ENCODE measurements at regions of chr10 and their contacts with region 1.

Region 1: DNA sequence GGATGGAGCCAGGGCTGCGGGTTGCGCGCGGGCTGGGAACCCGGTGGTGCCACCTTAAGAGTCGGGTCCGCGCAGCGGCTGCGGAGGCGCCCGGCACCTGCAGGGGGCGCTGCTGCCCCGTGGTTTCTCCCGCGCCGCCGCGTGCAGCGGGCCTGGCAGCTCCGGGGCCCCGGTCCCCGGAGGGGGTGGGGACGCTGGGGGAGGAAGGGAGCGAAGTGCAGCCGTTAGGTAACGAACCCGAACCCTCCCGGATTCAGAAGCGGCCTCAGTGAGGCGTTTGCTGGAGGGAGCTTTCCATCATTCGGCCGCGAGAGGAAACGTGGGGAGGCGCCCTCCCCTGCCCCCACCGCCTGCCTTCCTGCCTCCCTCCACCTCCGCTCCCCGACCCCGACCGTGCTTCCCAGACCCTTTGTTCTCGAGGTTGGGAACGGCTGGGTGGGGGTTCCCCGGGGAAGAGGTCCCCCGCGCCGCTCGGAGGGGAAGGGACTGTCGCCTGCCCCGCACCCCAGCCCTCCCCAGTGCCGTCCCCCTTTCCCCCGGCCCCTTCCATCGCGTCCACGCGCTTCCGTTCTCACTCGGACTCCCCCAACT is 29.6 kb downstream of the SKIDA1 start:
- DNase-seq: peak; percentile 77 to 94 (median 85)
- ATAC-seq: peak; percentile 85
- H3K4me3 ChIP-seq: peak overlapping the region; percentile 73 to 79
- H3K4me3 Mint-ChIP-seq: peak overlapping the region; percentile 81
- H3K27ac ChIP-seq: no peak overlapping the region
- H3K27ac Mint-ChIP-seq: no peak overlapping the region
- H3K4me1 ChIP-seq: peaks cover 35% of the 10 kb centered on the region
- H3K4me1 Mint-ChIP-seq: peaks cover 19% of the 10 kb centered on the region
- H3K27me3 ChIP-seq: peaks cover 53 to 58% of the 10 kb centered on the region in 2 experiments
- H3K27me3 Mint-ChIP-seq: peaks cover 60% of the 10 kb centered on the region
- CTCF ChIP-seq: peak; percentile 98

Region 2: GRCh38 chr10:21432271-21432670 is 63.6 kb before region 1 on chr10:
- CTCF ChIA-PET with region 1: no interaction called
- POLR2A ChIA-PET with region 1: no interaction called
- intact Hi-C with region 1: no loop called
- DNase-seq: no peak
- ATAC-seq: no peak
- H3K4me3 ChIP-seq: no peak overlapping the region
- H3K4me3 Mint-ChIP-seq: no peak overlapping the region
- H3K27ac ChIP-seq: no peak overlapping the region
- H3K27ac Mint-ChIP-seq: no peak overlapping the region
- H3K4me1 ChIP-seq: no peaks in the 10 kb centered on the region
- H3K4me1 Mint-ChIP-seq: no peaks in the 10 kb centered on the region
- H3K27me3 ChIP-seq: no peaks in the 10 kb centered on the region
- H3K27me3 Mint-ChIP-seq: peaks cover 7% of the 10 kb centered on the region
- CTCF ChIP-seq: no peak

Region 3: DNA sequence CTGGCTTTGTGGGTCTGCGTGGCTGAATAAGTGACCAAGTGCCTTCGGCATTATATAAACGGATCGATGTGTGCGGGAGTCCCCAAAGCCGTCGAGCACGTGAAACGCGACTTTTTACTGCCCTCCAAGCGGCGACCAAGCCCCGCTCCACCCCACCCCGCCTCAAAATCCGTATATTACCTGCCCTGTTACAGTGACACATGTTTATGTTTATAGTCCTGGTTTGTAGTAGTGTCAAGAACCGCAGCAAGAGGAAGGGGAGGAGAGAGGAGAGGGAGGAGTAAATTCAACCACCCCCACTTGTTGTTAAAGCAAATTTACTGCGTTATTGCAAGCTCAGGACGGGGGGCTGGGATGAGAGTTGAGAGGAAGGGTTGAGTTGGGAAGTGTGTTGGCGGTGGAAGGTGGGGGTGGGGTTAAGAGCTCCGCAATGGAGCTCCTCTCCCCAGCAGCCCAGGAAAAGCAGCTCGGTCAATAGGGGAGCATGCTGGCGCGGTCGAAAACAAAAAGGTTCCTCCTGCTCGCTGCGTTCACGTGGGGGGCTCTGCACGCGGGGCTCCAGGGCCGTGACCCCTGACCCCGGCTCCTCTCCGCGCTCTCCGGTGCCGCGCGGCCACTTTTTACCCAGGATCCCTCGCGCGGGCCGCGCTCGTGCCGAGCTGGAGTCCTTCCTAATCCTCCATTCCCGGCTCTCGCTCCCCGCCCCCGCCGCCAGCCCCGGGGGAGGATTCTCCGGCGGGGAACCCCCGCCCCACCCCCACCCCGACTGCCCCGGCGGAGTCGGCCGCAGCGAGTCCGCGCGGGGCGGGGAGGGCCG is 29.7 kb after region 1 on chr10 and contains the start of gene SKIDA1:
- CTCF ChIA-PET with region 1: interaction called, 11 read pairs
- POLR2A ChIA-PET with region 1: interaction called, 12 read pairs
- intact Hi-C with region 1: loop called in 1 of 2 experiments (anchors 2 kb)
- DNase-seq: peak; percentile 13 to 77 (median 53)
- ATAC-seq: peak; percentile 73
- H3K4me3 ChIP-seq: peak within 1 kb of the TSS; percentile 70 to 75
- H3K4me3 Mint-ChIP-seq: peak within 1 kb of the TSS; percentile 87
- H3K27ac ChIP-seq: peak within 1 kb of the TSS; percentile 31 to 70
- H3K27ac Mint-ChIP-seq: peak within 1 kb of the TSS; percentile 92
- H3K4me1 ChIP-seq: peaks cover 15% of the 10 kb centered on the region
- H3K4me1 Mint-ChIP-seq: peaks cover 25% of the 10 kb centered on the region
- H3K27me3 ChIP-seq: peaks cover 17 to 28% of the 10 kb centered on the region in 2 experiments
- H3K27me3 Mint-ChIP-seq: peaks cover 39% of the 10 kb centered on the region
- CTCF ChIP-seq: no peak
- total RNA-seq, gene SKIDA1: not detected

Region 4: GRCh38 chr10:21556527-21556926 is 60.7 kb after region 1 on chr10:
- CTCF ChIA-PET with region 1: no interaction called
- POLR2A ChIA-PET with region 1: no interaction called
- intact Hi-C with region 1: no loop called
- DNase-seq: no peak
- ATAC-seq: no peak
- H3K4me3 ChIP-seq: no peak overlapping the region
- H3K4me3 Mint-ChIP-seq: no peak overlapping the region
- H3K27ac ChIP-seq: no peak overlapping the region
- H3K27ac Mint-ChIP-seq: no peak overlapping the region
- H3K4me1 ChIP-seq: no peaks in the 10 kb centered on the region
- H3K4me1 Mint-ChIP-seq: peaks cover 39% of the 10 kb centered on the region
- H3K27me3 ChIP-seq: no peaks in the 10 kb centered on the region
- H3K27me3 Mint-ChIP-seq: no peaks in the 10 kb centered on the region
- CTCF ChIP-seq: no peak

Region 5: DNA sequence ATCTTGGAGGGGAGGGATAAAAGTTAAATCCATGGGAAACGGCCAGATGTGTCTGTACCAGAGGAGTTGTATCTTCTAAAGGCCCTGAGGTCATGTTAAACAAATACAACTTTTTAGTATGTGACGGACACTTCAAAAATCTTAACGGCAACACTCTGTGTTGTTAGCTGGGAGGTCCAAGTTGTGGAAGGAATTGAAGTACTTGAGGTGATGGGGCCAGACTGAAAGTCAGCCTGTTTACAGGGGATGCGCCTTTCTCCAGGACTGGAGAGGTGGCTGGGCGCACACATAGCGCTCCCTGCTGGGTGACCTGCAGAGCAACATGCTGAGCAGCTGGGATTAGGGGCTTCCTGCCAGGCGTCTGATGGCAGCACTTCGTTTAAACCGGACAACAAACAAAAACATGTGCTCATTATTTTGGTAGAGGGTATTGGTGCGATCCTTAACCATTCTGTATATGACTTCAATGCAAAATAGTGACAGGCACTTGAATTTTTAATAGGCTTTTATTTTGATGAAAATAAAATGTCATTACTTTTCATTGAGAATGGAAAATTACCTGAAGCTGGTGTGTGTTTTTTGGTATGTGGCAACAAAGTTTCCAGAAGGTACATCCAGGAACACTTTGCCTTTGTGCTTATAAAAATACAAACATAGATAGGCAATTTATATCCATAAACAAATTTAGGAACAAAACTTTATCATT is 236.4 kb after region 1 on chr10:
- CTCF ChIA-PET with region 1: interaction called, 25 read pairs
- POLR2A ChIA-PET with region 1: no interaction called
- intact Hi-C with region 1: loop called (anchors 1 kb)
- DNase-seq: peak in 8 of 9 experiments; percentile 22 to 63 (median 46)
- ATAC-seq: peak; percentile 85
- H3K4me3 ChIP-seq: no peak overlapping the region
- H3K4me3 Mint-ChIP-seq: no peak overlapping the region
- H3K27ac ChIP-seq: no peak overlapping the region
- H3K27ac Mint-ChIP-seq: no peak overlapping the region
- H3K4me1 ChIP-seq: peaks cover 9% of the 10 kb centered on the region
- H3K4me1 Mint-ChIP-seq: peaks cover 27% of the 10 kb centered on the region
- H3K27me3 ChIP-seq: no peaks in the 10 kb centered on the region
- H3K27me3 Mint-ChIP-seq: no peaks in the 10 kb centered on the region
- CTCF ChIP-seq: peak; percentile 56

Region 6: DNA sequence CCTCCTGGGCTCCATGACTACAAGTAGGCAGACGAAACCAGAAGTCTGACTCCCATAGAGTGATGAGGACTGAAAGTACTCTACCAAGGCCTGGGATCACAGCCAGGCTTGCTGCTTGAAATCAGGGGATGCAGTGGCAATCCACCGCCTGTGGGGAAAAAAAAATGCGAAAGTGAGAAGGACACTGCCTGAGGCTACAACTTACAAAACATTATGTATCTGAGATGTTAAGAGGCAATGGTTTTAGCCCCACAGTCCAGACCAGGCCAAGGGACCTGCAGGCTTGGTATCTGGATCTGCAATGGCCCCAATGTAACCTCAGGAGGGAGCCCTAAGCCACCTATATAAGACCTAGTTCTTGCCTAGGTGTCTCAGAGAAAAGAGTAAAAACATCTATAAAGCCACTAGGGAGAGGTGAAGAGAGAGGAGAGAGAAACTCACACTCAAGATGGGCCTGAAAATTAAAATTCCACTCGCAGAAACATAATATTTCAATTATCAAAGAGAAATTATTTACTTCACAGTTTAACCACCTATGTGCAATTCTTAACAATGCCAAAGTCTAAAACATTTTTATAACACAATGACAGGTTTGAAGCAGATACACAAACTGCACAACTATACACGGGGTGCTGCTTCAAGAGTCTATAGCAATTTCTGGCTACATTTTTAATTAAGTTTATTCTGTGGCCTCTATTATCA is 493.8 kb after region 1 on chr10:
- CTCF ChIA-PET with region 1: interaction called, 41 read pairs
- POLR2A ChIA-PET with region 1: no interaction called
- intact Hi-C with region 1: no loop called
- DNase-seq: peak in 6 of 9 experiments; percentile 3 to 64 (median 22)
- ATAC-seq: peak; percentile 89
- H3K4me3 ChIP-seq: no peak overlapping the region
- H3K4me3 Mint-ChIP-seq: no peak overlapping the region
- H3K27ac ChIP-seq: no peak overlapping the region
- H3K27ac Mint-ChIP-seq: no peak overlapping the region
- H3K4me1 ChIP-seq: no peaks in the 10 kb centered on the region
- H3K4me1 Mint-ChIP-seq: peaks cover 10% of the 10 kb centered on the region
- H3K27me3 ChIP-seq: no peaks in the 10 kb centered on the region
- H3K27me3 Mint-ChIP-seq: no peaks in the 10 kb centered on the region
- CTCF ChIP-seq: peak; percentile 53

Region 7: GRCh38 chr10:22251751-22252223 is 755.9 kb after region 1 on chr10:
- CTCF ChIA-PET with region 1: interaction called, 4 read pairs
- POLR2A ChIA-PET with region 1: no interaction called
- intact Hi-C with region 1: loop called in 1 of 2 experiments (anchors 10 kb)
- DNase-seq: peak; percentile 25 to 82 (median 63)
- ATAC-seq: peak; percentile 59
- H3K4me3 ChIP-seq: peak overlapping the region; percentile 59 to 67
- H3K4me3 Mint-ChIP-seq: peak overlapping the region; percentile 94
- H3K27ac ChIP-seq: peak overlapping the region; percentile 77 to 85
- H3K27ac Mint-ChIP-seq: peak overlapping the region; percentile 98
- H3K4me1 ChIP-seq: peaks cover 6% of the 10 kb centered on the region
- H3K4me1 Mint-ChIP-seq: peaks cover 24% of the 10 kb centered on the region
- H3K27me3 ChIP-seq: peaks cover 9 to 10% of the 10 kb centered on the region in 2 experiments
- H3K27me3 Mint-ChIP-seq: peaks cover 30% of the 10 kb centered on the region
- CTCF ChIP-seq: no peak

Region 8: GRCh38 chr10:22988581-22989360 is 1492.9 kb after region 1 on chr10:
- CTCF ChIA-PET with region 1: interaction called, 4 read pairs
- POLR2A ChIA-PET with region 1: no interaction called
- intact Hi-C with region 1: loop called (anchors 2 kb)
- DNase-seq: peak; percentile 46 to 85 (median 74)
- ATAC-seq: peak; percentile 80
- H3K4me3 ChIP-seq: no peak overlapping the region
- H3K4me3 Mint-ChIP-seq: no peak overlapping the region
- H3K27ac ChIP-seq: no peak overlapping the region
- H3K27ac Mint-ChIP-seq: no peak overlapping the region
- H3K4me1 ChIP-seq: peaks cover 4% of the 10 kb centered on the region
- H3K4me1 Mint-ChIP-seq: peaks cover 14% of the 10 kb centered on the region
- H3K27me3 ChIP-seq: no peaks in the 10 kb centered on the region
- H3K27me3 Mint-ChIP-seq: peaks cover 2% of the 10 kb centered on the region
- CTCF ChIP-seq: peak; percentile 88